ENCODE measurements at regions of chr6 and their contacts with region 1.

Region 1: DNA sequence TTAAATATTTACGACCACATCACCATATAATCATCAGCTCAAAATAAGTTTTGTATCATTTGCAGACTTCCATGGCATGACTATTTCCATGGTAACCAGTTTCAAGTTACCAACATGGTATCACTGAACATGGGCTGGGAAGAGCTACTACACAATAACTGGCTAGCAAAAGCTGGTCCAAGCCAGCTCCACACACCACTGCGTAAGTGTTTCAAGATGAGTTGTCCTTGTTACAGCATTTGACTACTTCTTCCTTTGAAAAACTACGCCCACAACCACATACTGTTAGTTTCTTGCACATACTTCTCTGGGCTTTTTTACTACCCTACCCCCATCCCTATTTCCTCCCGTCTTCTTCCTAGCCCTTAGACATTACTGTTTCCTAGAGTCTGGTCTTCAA is 8.5 kb downstream of the CD164 start:
- DNase-seq: peak; percentile 46
- H3K4me3 Mint-ChIP-seq: peak overlapping the region; percentile 81
- H3K27ac Mint-ChIP-seq: peak overlapping the region; percentile 92
- H3K4me1 Mint-ChIP-seq: peaks cover 75% of the 10 kb centered on the region
- H3K27me3 Mint-ChIP-seq: no peaks in the 10 kb centered on the region

Region 2: GRCh38 chr6:109202409-109203284 is 171.1 kb before region 1 on chr6:
- intact Hi-C with region 1: loop called (anchors 1 kb)
- DNase-seq: no peak
- H3K4me3 Mint-ChIP-seq: no peak overlapping the region
- H3K27ac Mint-ChIP-seq: peak overlapping the region; percentile 62
- H3K4me1 Mint-ChIP-seq: peaks cover 4% of the 10 kb centered on the region
- H3K27me3 Mint-ChIP-seq: no peaks in the 10 kb centered on the region

Region 3: DNA sequence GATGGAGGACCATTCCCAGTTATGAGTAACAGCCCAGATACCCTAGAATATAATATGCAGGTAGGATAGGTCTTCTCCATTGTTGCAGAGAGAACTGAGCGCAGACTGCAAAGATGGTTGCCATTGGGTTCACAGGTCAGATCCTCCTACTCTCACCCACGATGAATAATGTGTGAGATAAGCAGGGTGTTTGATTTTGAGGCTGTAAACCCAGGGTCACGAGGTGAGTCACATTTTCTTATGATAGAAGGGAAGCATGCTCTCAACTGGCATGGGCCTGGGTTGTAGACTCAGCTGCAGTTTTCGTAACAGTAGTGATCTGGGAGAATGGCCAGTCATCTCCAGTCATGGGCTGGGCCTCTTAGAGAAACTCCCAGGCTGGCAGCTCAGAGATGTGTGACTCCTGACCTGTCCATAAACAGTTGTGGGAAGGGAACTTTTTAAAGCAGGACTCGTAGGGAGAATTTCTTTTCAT is 65.7 kb before region 1 on chr6:
- intact Hi-C with region 1: loop called (anchors 2 kb)
- DNase-seq: no peak
- H3K4me3 Mint-ChIP-seq: no peak overlapping the region
- H3K27ac Mint-ChIP-seq: no peak overlapping the region
- H3K4me1 Mint-ChIP-seq: peaks cover 12% of the 10 kb centered on the region
- H3K27me3 Mint-ChIP-seq: peaks cover 2% of the 10 kb centered on the region

Region 4: GRCh38 chr6:109349419-109350078 is 24.2 kb before region 1 on chr6:
- intact Hi-C with region 1: no loop called
- DNase-seq: no peak
- H3K4me3 Mint-ChIP-seq: no peak overlapping the region
- H3K27ac Mint-ChIP-seq: no peak overlapping the region
- H3K4me1 Mint-ChIP-seq: peaks cover 13% of the 10 kb centered on the region
- H3K27me3 Mint-ChIP-seq: no peaks in the 10 kb centered on the region

Region 5: DNA sequence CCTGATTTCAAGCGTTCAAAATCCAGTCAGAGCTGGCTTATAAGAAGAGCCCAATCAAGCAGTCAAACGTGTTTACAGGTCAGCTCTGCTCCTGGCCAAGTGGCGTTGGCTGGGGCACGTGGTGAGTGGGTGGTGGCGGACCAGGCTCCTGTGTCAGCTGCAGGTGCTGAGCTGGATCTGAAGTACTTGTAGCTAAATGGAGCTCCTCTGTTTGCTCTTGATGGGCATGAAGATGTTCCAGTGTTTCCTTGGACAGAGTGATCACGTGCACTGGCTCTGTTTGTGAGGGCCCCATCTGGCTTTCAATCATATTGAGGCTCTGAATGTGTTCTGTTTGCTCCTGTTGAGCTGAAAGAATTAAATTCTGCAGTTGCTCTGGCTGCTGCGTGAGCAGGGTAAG is 92.0 kb after region 1 on chr6:
- intact Hi-C with region 1: no loop called
- DNase-seq: no peak
- H3K4me3 Mint-ChIP-seq: no peak overlapping the region
- H3K27ac Mint-ChIP-seq: no peak overlapping the region
- H3K4me1 Mint-ChIP-seq: peaks cover 54% of the 10 kb centered on the region
- H3K27me3 Mint-ChIP-seq: no peaks in the 10 kb centered on the region

Region 6: GRCh38 chr6:109477725-109478124 is 104.0 kb after region 1 on chr6:
- intact Hi-C with region 1: loop called (anchors 2 kb)
- DNase-seq: no peak
- H3K4me3 Mint-ChIP-seq: peak overlapping the region; percentile 83
- H3K27ac Mint-ChIP-seq: peak overlapping the region; percentile 87
- H3K4me1 Mint-ChIP-seq: peaks cover 77% of the 10 kb centered on the region
- H3K27me3 Mint-ChIP-seq: no peaks in the 10 kb centered on the region

Measured in activated T-helper 1 cell treated with anti-CD3 and anti-CD28 coated beads, Interleukin-12 subunit alpha, Interleukin-12 subunit beta, Interleukin-2, Interleukin-4 antibody, amounts not matched to agents 30 ng/mL and 10 ng/mL and 1 ng/mL, durations not matched to agents 14 hours and 24 hours and 36 hours (primary cell).